ENCODE measurements at regions of chr10 and their contacts with region 1.

Region 1: DNA sequence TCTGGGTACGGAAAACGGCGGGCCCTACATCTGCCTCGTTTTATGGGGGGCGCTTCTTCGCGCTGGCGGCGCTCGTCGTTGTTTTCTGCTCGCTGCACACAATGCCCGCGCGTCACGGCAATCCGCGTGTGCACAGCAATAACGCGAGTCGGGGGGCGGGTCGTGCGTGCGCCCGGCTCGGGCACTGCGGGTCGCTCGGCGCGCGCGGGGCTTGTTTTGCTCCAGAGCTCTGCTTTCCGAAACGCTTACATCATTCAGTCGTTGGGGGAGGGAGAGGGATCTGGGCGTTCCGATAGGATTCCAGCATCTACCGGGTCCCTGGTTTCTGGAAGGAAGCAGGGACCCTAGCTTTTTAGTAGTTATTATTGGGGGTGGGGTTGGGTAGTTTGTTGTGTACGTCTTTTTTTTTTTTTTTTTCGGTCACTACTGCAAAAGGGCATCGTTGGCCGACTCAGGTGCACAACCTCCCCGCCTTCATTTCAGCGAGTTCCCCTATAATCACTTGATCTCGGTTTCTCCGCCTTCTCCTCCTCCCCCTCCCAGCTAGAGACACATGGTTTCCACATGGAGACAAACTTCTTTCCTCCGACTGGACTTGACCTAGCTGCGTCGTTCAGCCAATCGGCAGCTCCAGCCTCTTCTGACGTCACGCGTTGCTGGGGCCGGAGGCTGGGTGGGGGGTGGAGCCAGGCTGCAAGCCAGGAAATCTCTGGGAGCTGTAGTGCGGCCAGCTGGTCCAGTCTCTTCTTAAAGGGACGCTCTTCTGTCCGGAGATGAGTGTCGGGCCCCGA is 3.5 kb downstream of the MXI1 start:
- H3K4me3 ChIP-seq: peak overlapping the region; percentile 68
- H3K27ac ChIP-seq: peak overlapping the region; percentile 93
- H3K4me1 ChIP-seq: peaks cover 20% of the 10 kb centered on the region
- CTCF ChIP-seq: peak; percentile 67

Region 2: DNA sequence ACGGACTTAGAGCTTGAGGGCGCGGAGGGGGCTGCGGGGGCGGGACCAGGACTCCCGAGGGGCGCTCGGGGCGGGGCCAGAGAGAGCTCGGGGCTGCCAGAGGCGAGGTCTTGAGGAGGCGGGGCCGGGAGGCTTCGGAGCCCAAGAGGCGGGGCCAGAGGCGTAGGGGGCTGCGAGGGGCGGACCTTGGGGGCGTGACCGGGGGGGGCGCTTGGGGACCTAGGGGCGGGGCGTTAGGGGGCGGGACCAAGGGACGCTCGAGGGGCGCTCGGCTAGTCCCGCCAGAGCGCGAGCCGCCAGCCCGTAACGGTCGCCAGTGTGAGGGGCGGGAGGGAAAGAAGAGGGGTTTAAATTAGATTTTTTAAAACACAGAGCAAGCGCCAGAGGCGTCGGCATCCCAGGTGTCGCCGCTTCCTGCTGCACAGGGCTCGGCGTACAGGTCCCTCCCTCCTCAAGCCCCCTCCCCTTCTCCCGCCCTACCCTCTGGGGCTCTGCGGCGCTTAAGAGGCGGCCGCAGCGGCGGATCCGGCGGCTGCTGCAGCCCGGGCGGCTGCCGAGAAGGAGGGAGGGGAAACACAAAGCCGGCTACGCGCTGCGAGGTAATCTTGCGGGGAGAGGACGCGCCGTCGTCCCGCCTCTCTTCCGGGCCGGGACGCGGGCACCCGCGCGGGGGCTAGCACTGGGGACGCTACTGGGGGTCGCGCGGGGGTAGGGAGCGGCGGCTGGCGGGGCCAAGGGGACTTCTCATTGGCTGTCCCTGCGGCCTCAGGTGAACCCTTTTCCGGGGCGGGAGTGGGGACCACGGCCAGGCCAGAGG is 203.0 kb before region 1 on chr10 and contains the start of gene ADD3:
- CTCF ChIA-PET with region 1: interaction called, 3 read pairs
- POLR2A ChIA-PET with region 1: interaction called, 17 read pairs
- H3K4me3 ChIP-seq: peak within 1 kb of the TSS; percentile 87
- H3K27ac ChIP-seq: peak within 1 kb of the TSS; percentile 98
- H3K4me1 ChIP-seq: peaks cover 61% of the 10 kb centered on the region
- CTCF ChIP-seq: 0 out of 2 replicates have a peak, but pooled peaks have one; percentile 19

Region 3: DNA sequence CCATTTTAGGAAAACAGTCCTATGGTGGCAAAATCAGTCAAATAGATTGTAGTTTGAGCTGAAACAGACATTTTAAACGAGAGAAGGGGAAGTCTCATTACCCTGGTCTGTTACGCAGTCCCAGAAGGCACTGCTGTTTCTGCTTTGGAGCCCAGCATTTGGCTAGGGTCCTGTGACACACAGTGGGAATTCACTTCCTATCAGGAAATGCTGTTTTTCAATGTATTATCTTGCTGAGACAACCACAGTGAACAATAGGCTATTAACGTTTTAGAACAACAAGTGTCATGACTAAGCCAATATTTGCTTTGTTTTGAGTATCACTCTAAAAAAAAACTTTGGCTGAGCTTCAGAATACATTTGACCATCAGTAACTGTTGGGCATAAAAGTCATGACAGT is 129.0 kb before region 1 on chr10:
- CTCF ChIA-PET with region 1: no interaction called
- POLR2A ChIA-PET with region 1: no interaction called
- H3K4me3 ChIP-seq: no peak overlapping the region
- H3K27ac ChIP-seq: no peak overlapping the region; the same call in 1 of the 2 replicates
- H3K4me1 ChIP-seq: peaks cover 56% of the 10 kb centered on the region
- CTCF ChIP-seq: no peak

Region 4: DNA sequence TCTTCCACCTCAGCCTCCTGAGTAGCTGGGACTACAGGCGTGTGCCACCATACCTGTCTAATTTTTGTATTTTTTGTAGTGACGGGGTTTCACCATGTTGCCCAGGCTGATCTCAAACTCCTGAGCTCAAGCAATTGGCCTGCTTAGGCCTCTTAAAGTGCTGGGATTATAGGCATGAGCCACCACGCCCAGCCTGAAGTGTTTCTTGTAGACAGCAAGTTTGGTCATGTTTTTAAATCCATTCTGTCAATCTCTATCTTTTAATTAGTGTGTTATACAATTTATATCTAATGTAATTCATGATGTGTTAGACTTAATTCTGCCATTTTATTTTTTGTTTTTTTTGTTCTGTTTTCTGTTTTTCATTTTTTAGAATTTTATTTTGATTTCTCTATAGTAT is 20.7 kb before region 1 on chr10:
- CTCF ChIA-PET with region 1: interaction called, 23 read pairs
- POLR2A ChIA-PET with region 1: interaction called, 3 read pairs
- H3K4me3 ChIP-seq: no peak overlapping the region
- H3K27ac ChIP-seq: no peak overlapping the region
- H3K4me1 ChIP-seq: no peaks in the 10 kb centered on the region
- CTCF ChIP-seq: no peak

Region 5: DNA sequence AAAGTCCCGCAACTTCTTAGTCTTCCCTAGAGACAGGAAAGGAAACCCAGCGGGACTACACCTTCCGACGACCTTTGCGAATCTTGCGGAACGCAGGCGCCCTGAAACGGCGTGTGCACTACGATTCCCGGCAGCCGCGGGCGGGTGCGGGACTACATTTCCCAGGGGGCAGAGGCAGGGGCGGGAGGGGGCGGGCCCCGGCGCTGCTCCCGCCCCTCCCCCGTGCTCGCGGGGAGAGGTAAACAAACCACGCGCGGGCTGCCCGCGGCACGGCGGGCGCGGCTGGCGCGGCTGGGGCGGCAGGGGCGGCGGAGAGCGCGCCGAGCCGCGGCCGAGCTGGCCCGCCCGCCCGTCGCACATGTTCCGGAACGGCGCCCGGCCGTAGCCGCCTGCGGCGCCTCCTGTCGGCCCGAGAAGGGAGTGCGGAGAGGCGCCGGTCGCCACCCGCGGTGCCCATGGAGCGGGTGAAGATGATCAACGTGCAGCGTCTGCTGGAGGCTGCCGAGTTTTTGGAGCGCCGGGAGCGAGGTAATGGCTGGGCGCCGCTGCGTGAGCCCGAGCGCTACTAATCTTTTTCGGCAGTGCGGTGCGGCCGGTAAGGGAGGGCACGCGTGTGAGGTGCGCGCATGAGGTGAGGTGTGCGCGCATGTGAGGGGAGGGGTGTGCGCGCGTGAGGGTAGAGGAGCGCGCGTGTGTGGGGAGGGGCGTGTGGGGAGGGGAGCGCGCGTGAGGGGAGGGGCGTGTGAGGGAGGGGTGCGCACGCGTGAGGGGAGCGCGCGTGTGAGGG is 15.1 kb after region 1 on chr10:
- CTCF ChIA-PET with region 1: interaction called, 70 read pairs
- POLR2A ChIA-PET with region 1: interaction called, 75 read pairs
- H3K4me3 ChIP-seq: peak overlapping the region; percentile 85
- H3K27ac ChIP-seq: peak overlapping the region; percentile 90
- H3K4me1 ChIP-seq: peaks cover 7% of the 10 kb centered on the region
- CTCF ChIP-seq: peak; percentile 76

Region 6: GRCh38 chr10:110279407-110279986 is 68.6 kb after region 1 on chr10:
- CTCF ChIA-PET with region 1: interaction called, 43 read pairs
- POLR2A ChIA-PET with region 1: interaction called, 4 read pairs
- H3K4me3 ChIP-seq: no peak overlapping the region
- H3K27ac ChIP-seq: no peak overlapping the region
- H3K4me1 ChIP-seq: peaks cover 11% of the 10 kb centered on the region
- CTCF ChIP-seq: peak; percentile 65; the same call in 1 of the 2 replicates

Region 7: DNA sequence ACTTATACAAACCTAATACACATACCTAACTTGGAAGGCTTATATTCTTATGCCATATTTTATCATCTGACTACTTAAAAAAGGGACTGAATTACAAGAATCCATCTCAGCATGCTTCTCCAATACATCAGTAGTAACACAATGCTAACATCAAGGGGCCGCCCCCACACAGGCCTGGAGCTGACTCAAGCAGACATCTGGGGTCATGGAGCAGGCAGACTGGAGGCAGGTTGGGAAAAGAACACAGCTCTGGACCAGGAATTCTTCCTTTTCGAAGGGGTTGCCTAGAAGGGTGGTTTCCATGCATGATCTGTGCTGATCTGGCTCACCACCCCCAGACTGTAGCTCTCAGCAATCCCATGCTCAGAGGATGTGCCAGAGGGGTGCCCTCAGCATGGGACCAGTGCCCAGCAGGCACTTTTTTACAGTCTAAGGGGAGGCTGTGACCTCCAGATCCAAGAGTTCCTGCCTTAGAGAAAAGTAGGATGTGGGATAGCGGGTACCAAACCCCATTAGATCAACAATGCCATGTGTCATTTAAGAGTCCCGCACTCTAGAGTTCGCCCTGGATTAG is 260.8 kb after region 1 on chr10:
- CTCF ChIA-PET with region 1: no interaction called
- POLR2A ChIA-PET with region 1: no interaction called
- H3K4me3 ChIP-seq: no peak overlapping the region
- H3K27ac ChIP-seq: no peak overlapping the region
- H3K4me1 ChIP-seq: no peaks in the 10 kb centered on the region
- CTCF ChIP-seq: no peak

Region 8: GRCh38 chr10:110746254-110746826 is 535.5 kb after region 1 on chr10:
- CTCF ChIA-PET with region 1: no interaction called
- POLR2A ChIA-PET with region 1: no interaction called
- H3K4me3 ChIP-seq: no peak overlapping the region
- H3K27ac ChIP-seq: no peak overlapping the region
- H3K4me1 ChIP-seq: no peaks in the 10 kb centered on the region
- CTCF ChIP-seq: peak; percentile 71